PC-3 (cell line): ENCODE measurements at regions of chr10 and their contacts with region 1.

Region 1: GRCh38 chr10:69681436-69681835 is 51.4 kb downstream of the FAM241B start:
- DNase-seq: no peak
- ATAC-seq: no peak
- H3K4me3 ChIP-seq: no peak overlapping the region
- H3K27ac ChIP-seq: no peak overlapping the region
- H3K4me1 ChIP-seq: peaks cover 23% of the 10 kb centered on the region
- H3K27me3 ChIP-seq: peaks cover 54% of the 10 kb centered on the region
- CTCF ChIP-seq: no peak

Region 2: DNA sequence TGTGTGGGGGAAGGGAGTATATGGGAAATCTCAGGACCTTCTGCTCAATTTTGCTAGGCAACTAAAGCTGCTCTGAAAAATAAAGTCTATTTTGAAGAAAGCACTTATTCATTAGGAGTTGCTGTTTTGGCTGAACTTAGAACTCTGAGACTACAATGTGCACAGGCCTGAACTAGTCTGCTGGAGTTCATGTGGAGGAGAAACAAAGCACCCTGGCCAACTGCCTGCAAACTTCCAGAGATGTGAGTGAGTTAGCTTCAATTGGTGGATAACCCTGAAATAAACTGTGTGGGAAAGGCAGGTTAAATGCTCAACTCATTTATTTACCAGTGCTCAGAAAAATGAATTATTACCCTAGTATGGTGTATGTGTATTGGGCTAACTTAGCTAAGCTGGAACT is 68.7 kb before region 1 on chr10:
- CTCF ChIA-PET with region 1: no interaction called
- POLR2A ChIA-PET with region 1: no interaction called
- intact Hi-C with region 1: no loop called
- DNase-seq: no peak
- ATAC-seq: no peak
- H3K4me3 ChIP-seq: no peak overlapping the region
- H3K27ac ChIP-seq: no peak overlapping the region
- H3K4me1 ChIP-seq: no peaks in the 10 kb centered on the region
- H3K27me3 ChIP-seq: peaks cover 31% of the 10 kb centered on the region
- CTCF ChIP-seq: no peak

Region 3: DNA sequence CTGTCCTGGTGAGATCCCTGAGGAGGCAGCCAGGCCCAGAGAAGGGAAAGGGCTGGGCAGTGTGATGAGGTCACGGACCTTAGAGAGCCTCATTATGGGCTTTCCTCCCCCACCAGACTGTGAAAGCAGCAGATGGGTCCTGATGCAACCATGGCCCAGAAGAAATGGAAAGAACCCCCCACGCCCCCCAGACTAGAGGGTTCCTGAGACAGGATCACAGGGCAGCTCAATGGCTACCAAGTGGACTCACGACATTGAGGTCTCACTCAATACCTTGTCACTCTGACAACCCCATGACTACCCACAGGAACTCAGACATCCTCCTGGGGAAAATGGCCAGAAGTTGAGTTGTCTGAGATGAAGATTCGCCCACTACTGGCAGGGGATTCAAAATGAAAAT is 14.7 kb before region 1 on chr10:
- CTCF ChIA-PET with region 1: interaction called, 10 read pairs
- POLR2A ChIA-PET with region 1: no interaction called
- intact Hi-C with region 1: no loop called
- DNase-seq: no peak
- ATAC-seq: no peak
- H3K4me3 ChIP-seq: no peak overlapping the region
- H3K27ac ChIP-seq: no peak overlapping the region
- H3K4me1 ChIP-seq: no peaks in the 10 kb centered on the region
- H3K27me3 ChIP-seq: peaks cover 78% of the 10 kb centered on the region
- CTCF ChIP-seq: no peak

Region 4: DNA sequence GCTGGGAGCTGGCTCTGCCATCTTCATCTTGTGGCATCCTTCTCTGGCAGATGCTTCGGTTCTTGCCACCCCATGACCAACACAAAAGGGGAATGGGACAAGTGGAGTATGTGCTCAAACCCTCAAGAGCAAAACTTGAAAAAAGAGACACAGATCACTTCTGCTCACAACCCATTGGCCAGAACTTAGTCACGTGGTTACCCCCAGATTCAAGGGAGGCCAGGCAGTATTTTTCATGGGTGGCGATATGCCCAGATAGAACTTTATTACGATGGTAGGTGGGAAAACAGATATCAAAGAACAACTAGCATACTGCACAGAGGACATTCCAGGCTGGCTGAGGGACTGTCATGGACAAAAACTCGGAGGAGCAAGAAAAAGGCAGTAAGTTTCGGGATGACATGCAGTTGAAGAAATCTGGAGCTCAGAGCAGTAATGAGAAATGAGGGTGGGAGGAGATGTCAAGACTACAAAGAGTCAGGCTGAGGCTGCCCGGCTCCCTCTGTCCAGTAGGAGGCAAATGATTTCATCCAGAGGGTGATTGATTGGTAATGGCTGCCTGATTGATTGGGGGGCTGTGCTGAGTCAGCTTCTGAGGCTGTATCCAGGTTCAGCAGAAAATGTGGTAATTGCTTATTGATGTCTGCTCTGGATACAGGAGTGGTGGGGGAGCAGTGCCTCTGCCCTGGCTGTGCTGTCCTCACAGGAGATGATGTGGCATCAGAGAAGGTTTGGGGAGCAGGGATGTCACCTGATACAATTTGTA is 145.5 kb after region 1 on chr10:
- CTCF ChIA-PET with region 1: no interaction called
- POLR2A ChIA-PET with region 1: no interaction called
- intact Hi-C with region 1: no loop called
- DNase-seq: no peak
- ATAC-seq: no peak
- H3K4me3 ChIP-seq: no peak overlapping the region
- H3K27ac ChIP-seq: no peak overlapping the region
- H3K4me1 ChIP-seq: no peaks in the 10 kb centered on the region
- H3K27me3 ChIP-seq: no peaks in the 10 kb centered on the region
- CTCF ChIP-seq: peak; percentile 42; the same call in 1 of the 2 replicates